Tibial artery (tissue), 4 donors: ENCODE measurements at regions of chr5 and their contacts with region 1.

Region 1: GRCh38 chr5:174935854-174936474 is 211.6 kb downstream of the MSX2 start:
- DNase-seq: no peak
- H3K4me3 ChIP-seq: no peak overlapping the region
- H3K27ac ChIP-seq: no peak overlapping the region
- H3K4me1 ChIP-seq: no peaks in the 10 kb centered on the region
- H3K27me3 ChIP-seq: peaks cover 0 to 10% of the 10 kb centered on the region in 2 donors
- CTCF ChIP-seq: peak; percentile 65 to 79

Region 2: GRCh38 chr5:174424219-174425053 is 511.5 kb before region 1 on chr5:
- intact Hi-C with region 1: loop called (anchors 10 kb)
- DNase-seq: no peak
- H3K4me3 ChIP-seq: no peak overlapping the region
- H3K27ac ChIP-seq: no peak overlapping the region
- H3K4me1 ChIP-seq: no peaks in the 10 kb centered on the region
- H3K27me3 ChIP-seq: peaks cover 0 to 26% of the 10 kb centered on the region in 2 donors
- CTCF ChIP-seq: no peak

Region 3: DNA sequence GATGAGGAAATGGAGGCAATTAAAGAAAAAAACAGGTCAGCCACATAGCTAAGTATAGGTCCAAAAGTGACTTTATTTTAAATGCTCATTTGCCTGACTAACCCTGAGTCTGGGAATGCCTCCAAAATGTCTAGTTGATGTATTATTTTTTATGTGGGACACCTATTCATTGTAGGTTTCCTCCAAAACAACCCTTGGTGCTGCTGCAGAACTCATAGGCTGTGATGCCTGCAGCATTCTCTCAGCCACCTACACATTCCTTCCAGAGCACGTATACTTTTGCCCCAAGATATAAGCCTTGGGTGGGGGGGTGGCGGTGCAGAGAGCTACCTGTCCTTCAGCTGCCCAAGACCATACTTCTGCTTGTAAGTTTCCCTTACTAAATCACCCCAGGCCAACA is 134.2 kb before region 1 on chr5:
- intact Hi-C with region 1: no loop called
- DNase-seq: no peak
- H3K4me3 ChIP-seq: no peak overlapping the region
- H3K27ac ChIP-seq: no peak overlapping the region
- H3K4me1 ChIP-seq: no peaks in the 10 kb centered on the region
- H3K27me3 ChIP-seq: peaks cover 0 to 17% of the 10 kb centered on the region in 2 donors
- CTCF ChIP-seq: no peak

Region 4: DNA sequence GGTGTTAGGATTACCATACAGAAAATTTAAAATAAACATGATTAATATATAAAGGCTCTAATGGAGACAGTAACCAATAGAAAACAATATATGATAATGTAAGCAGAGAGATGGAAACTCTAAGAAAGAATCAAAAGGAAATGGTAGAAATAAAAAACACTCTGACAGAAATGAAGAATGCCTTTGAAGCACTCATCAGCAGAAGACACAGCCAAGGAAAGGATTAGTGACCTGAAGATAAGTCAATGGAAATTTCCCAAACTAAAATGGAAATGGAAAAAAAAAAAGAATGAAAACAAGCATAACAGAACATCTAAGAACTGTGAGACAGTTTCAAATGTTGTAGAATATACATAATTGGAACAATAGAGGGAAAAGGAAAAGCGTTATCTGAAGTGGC is 205.5 kb after region 1 on chr5:
- intact Hi-C with region 1: no loop called
- DNase-seq: no peak
- H3K4me3 ChIP-seq: no peak overlapping the region
- H3K27ac ChIP-seq: no peak overlapping the region
- H3K4me1 ChIP-seq: no peaks in the 10 kb centered on the region
- H3K27me3 ChIP-seq: no peaks in the 10 kb centered on the region
- CTCF ChIP-seq: no peak